Caco-2 (cell line): ENCODE measurements at regions of chrX and their contacts with region 1.

Region 1: GRCh38 chrX:44872817-44873414 is at the start of gene KDM6A:
- DNase-seq: peak; percentile 97 to 98
- H3K4me3 ChIP-seq: peak within 1 kb of the TSS; percentile 69
- H3K4me3 Mint-ChIP-seq: peak within 1 kb of the TSS; percentile 74
- H3K27ac Mint-ChIP-seq: peak within 1 kb of the TSS; percentile 91
- H3K4me1 ChIP-seq: no peaks in the 10 kb centered on the region
- H3K4me1 Mint-ChIP-seq: no peaks in the 10 kb centered on the region
- H3K27me3 ChIP-seq: no peaks in the 10 kb centered on the region
- H3K27me3 Mint-ChIP-seq: no peaks in the 10 kb centered on the region
- CTCF ChIP-seq: no peak
- total RNA-seq, gene KDM6A: 34.2 and 44.1 TPM in 2 replicates

Region 2: GRCh38 chrX:44843318-44843702 is 29.6 kb before region 1 on chrX:
- CTCF ChIA-PET with region 1: no interaction called
- POLR2A ChIA-PET with region 1: interaction called, 20 read pairs
- intact Hi-C with region 1: no loop called
- DNase-seq: no peak
- H3K4me3 ChIP-seq: no peak overlapping the region
- H3K4me3 Mint-ChIP-seq: no peak overlapping the region
- H3K27ac Mint-ChIP-seq: no peak overlapping the region
- H3K4me1 ChIP-seq: peaks cover 19% of the 10 kb centered on the region
- H3K4me1 Mint-ChIP-seq: no peaks in the 10 kb centered on the region
- H3K27me3 ChIP-seq: no peaks in the 10 kb centered on the region
- H3K27me3 Mint-ChIP-seq: no peaks in the 10 kb centered on the region
- CTCF ChIP-seq: no peak

Region 3: DNA sequence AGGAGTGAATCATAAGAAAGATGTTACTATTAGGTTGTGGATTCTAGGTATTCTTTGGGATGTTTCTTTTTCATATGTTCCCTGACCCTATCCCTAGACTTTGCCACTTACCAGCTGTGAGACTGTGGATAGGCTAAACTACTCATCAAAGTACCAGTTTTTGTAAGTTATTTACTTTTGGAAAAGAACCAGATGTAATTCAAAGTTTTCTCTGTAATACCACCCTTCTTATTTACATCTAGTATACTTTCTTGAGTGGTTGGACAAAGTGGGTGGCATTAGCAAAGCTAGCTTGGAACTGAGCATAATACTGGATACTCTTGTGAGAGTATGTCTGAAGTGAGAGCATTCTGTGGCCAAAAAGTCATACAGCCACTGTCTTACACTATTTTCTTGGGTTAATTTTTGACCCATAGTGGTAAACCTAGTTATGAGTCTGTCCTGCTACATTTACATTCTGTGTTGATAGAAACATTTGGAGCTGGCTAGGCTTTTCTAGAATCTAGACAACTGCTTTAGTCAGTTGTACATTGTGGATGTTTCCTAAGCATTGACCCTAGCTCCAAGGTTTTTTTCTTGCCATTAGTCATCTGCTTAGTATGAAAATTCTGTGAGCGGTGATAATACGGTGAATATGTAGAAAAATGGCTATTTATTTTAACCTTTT is 41.7 kb after region 1 on chrX:
- CTCF ChIA-PET with region 1: no interaction called
- POLR2A ChIA-PET with region 1: interaction called, 14 read pairs
- intact Hi-C with region 1: no loop called
- DNase-seq: no peak
- H3K4me3 ChIP-seq: no peak overlapping the region
- H3K4me3 Mint-ChIP-seq: peak overlapping the region; percentile 25
- H3K27ac Mint-ChIP-seq: peak overlapping the region; percentile 50
- H3K4me1 ChIP-seq: peaks cover 20% of the 10 kb centered on the region
- H3K4me1 Mint-ChIP-seq: peaks cover 10% of the 10 kb centered on the region
- H3K27me3 ChIP-seq: no peaks in the 10 kb centered on the region
- H3K27me3 Mint-ChIP-seq: no peaks in the 10 kb centered on the region
- CTCF ChIP-seq: no peak

Region 4: DNA sequence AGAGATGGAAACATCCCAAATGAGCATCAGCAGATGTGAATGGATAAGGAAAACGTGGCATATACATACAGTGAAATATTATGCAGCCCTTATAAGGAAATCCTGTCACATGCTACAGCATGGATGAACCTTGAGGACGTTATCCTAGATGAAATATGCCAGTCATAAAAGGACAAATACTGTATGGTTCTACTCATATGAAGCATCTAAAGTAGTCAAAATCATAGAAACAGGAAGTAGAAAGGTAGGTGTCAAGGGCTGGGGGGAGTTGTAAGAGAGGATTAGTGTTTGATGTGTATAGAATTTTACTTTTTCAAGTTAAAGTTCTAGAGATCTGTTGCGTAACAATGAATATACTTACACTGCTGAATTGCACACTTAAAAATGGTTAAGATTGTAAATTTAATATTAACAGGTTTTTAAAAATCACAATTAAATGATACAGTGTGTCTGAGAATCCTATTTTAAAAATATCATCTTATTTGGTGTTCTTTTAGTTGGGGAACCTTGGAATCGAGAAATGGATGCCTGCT is 58.6 kb after region 1 on chrX:
- CTCF ChIA-PET with region 1: no interaction called
- POLR2A ChIA-PET with region 1: no interaction called
- intact Hi-C with region 1: no loop called
- DNase-seq: no peak
- H3K4me3 ChIP-seq: no peak overlapping the region
- H3K4me3 Mint-ChIP-seq: no peak overlapping the region
- H3K27ac Mint-ChIP-seq: no peak overlapping the region
- H3K4me1 ChIP-seq: peaks cover 15% of the 10 kb centered on the region
- H3K4me1 Mint-ChIP-seq: peaks cover 13% of the 10 kb centered on the region
- H3K27me3 ChIP-seq: no peaks in the 10 kb centered on the region
- H3K27me3 Mint-ChIP-seq: no peaks in the 10 kb centered on the region
- CTCF ChIP-seq: no peak

Region 5: DNA sequence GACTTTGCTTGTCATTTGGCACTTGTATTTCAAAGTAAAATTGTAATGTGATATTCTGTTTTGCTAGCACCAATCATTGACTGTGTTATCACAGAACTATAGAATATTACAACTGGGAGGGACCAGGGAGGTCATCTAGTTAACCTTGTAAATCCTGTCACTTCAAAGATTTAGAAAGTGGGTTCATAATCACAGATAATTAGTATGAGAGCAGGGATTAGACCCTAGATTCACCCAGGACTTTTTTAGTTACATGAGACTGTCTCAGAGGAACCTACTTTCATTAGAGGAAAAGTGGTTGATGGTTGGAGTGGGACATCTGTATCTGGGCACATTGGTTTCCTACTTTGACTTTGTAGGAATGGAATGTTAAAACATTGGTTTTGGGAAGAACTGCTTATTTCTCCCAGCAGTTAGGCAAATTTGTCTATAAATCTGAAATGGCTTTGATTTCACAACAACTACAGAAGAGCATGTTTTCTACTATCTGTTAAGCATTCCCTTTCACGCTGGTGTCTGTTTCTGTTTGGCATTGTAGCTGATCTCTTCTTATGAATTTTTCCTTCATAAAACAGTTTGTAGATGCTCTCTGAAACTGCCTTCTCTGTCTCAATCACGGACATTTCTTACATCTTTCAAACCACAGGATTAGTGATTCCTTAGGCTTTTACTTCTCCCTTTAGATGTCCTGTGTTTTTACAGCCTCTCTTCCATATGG is 183.7 kb after region 1 on chrX:
- CTCF ChIA-PET with region 1: no interaction called
- POLR2A ChIA-PET with region 1: interaction called, 10 read pairs
- intact Hi-C with region 1: no loop called
- DNase-seq: no peak
- H3K4me3 ChIP-seq: no peak overlapping the region
- H3K4me3 Mint-ChIP-seq: no peak overlapping the region
- H3K27ac Mint-ChIP-seq: no peak overlapping the region
- H3K4me1 ChIP-seq: no peaks in the 10 kb centered on the region
- H3K4me1 Mint-ChIP-seq: no peaks in the 10 kb centered on the region
- H3K27me3 ChIP-seq: no peaks in the 10 kb centered on the region
- H3K27me3 Mint-ChIP-seq: no peaks in the 10 kb centered on the region
- CTCF ChIP-seq: no peak